ENCODE measurements at regions of chr12 and their contacts with region 1.

Region 1: DNA sequence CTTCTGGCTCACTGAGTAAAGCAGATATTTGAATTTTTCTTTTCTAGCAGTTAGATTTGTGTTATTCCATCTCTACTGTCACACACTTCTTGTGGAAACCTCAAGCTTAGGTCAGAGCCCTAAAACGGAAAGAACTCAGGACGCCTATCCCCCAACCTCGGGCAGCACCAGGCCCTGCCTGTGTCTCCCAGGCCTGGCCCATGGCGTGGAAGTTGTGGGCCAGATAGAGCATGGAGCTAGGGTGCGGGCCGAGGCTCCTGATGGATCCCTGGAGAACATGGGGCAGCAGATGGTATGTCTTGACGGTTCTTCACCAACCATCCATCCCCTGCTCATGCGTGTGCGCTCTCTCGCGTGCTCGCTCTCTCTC is 20.6 kb downstream of the P2RX4 start:
- DNase-seq: no peak
- H3K4me3 ChIP-seq: no peak overlapping the region
- H3K27ac ChIP-seq: no peak overlapping the region
- H3K27me3 ChIP-seq: no peaks in the 10 kb centered on the region
- CTCF ChIP-seq: no peak

Region 2: GRCh38 chr12:121214855-121215745 is 15.4 kb before region 1 on chr12:
- CTCF ChIA-PET with region 1: interaction called, 13 read pairs
- POLR2A ChIA-PET with region 1: interaction called, 7 read pairs
- DNase-seq: peak; percentile 75
- H3K4me3 ChIP-seq: no peak overlapping the region
- H3K27ac ChIP-seq: no peak overlapping the region
- H3K27me3 ChIP-seq: no peaks in the 10 kb centered on the region
- CTCF ChIP-seq: no peak

Region 3: GRCh38 chr12:121240484-121241101 is 10.1 kb after region 1 on chr12:
- CTCF ChIA-PET with region 1: interaction called, 27 read pairs
- POLR2A ChIA-PET with region 1: no interaction called
- DNase-seq: no peak
- H3K4me3 ChIP-seq: no peak overlapping the region
- H3K27ac ChIP-seq: no peak overlapping the region
- H3K27me3 ChIP-seq: no peaks in the 10 kb centered on the region
- CTCF ChIP-seq: no peak

Region 4: GRCh38 chr12:121560392-121561008 is 330.0 kb after region 1 on chr12:
- CTCF ChIA-PET with region 1: no interaction called
- POLR2A ChIA-PET with region 1: no interaction called
- DNase-seq: no peak
- H3K4me3 ChIP-seq: no peak overlapping the region
- H3K27ac ChIP-seq: no peak overlapping the region
- H3K27me3 ChIP-seq: no peaks in the 10 kb centered on the region
- CTCF ChIP-seq: no peak

Measured in AG04450 (cell line).